Heart left ventricle (tissue), 16 donors: ENCODE measurements at regions of chr6 and their contacts with region 1.

Region 1: GRCh38 chr6:13120483-13121482 is 207.6 kb downstream of the TBC1D7 start:
- DNase-seq: peak in 4 of 5 donors; percentile 41 to 76 (median 59)
- ATAC-seq: peak; percentile 84 to 96 (median 95)
- H3K4me3 ChIP-seq: no peak overlapping the region
- H3K27ac ChIP-seq: peak overlapping the region in 6 of 12 donors; percentile 2 to 64 (median 20)
- H3K4me1 ChIP-seq: peaks cover 0 to 27% (median 9%) of the 10 kb centered on the region in 12 donors
- H3K27me3 ChIP-seq: no peaks in the 10 kb centered on the region
- CTCF ChIP-seq: peak in 7 of 12 donors; percentile 12 to 46 (median 25)
- POLR2A ChIP-seq: no peak

Region 2: GRCh38 chr6:12903246-12903645 is 217.5 kb before region 1 on chr6:
- intact Hi-C with region 1: loop called in 1 of 10 experiments (anchors 10 kb)
- DNase-seq: no peak
- ATAC-seq: peak; percentile 68 to 79 (median 72)
- H3K4me3 ChIP-seq: no peak overlapping the region
- H3K27ac ChIP-seq: no peak overlapping the region
- H3K4me1 ChIP-seq: peaks cover 0 to 13% (median 3%) of the 10 kb centered on the region in 12 donors
- H3K27me3 ChIP-seq: no peaks in the 10 kb centered on the region
- CTCF ChIP-seq: no peak
- POLR2A ChIP-seq: no peak

Region 3: DNA sequence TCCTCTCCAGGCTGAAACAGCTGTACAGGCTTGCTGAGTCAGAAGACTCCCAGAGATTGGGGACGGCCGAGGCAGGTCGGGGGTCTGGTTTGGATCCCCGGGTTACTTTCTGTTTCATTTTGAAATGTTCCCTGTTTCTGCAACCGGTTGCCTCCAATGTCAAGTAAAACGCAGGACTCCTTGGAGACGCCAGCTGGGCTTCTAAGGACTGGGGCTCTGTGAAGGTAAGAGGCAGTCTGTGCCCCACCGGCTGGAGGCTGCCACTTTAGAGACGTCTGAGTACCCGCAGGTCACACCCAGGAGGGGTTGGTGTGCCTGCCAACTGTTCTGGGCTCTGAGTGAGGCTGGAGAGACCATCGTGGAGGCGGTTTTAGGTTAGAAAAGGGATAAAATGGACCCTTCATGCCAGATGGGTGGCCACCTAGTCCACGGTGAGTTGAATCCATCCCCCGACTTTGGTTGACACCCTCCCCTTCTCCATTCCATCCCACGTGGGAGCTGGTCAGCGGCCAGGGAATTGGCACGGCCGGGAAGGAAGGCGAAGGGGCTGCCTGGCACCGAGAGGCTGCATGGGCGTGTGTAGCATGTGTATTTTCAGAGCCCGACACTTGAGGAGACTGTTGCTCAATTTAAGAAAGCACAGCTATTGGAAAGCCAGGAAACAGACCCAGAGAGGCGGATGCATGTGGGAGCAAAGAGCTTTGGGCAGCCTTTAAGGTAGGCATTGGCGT is 163.3 kb before region 1 on chr6:
- intact Hi-C with region 1: loop called in 2 of 10 experiments (anchors 5 kb)
- DNase-seq: peak; percentile 69 to 87 (median 78)
- ATAC-seq: peak; percentile 79 to 89 (median 86)
- H3K4me3 ChIP-seq: peak overlapping the region; percentile 40 to 79 (median 66)
- H3K27ac ChIP-seq: peak overlapping the region; percentile 1 to 91 (median 78)
- H3K4me1 ChIP-seq: peaks cover 0 to 38% (median 14%) of the 10 kb centered on the region in 12 donors
- H3K27me3 ChIP-seq: no peaks in the 10 kb centered on the region
- CTCF ChIP-seq: peak in 5 of 12 donors; percentile 19 to 50 (median 37)
- POLR2A ChIP-seq: no peak

Region 4: GRCh38 chr6:12962987-12963386 is 157.8 kb before region 1 on chr6:
- intact Hi-C with region 1: loop called in 2 of 10 experiments (anchors 5 kb)
- DNase-seq: no peak
- ATAC-seq: peak in 1 of 4 donors; percentile 59
- H3K4me3 ChIP-seq: peak overlapping the region in 10 of 12 donors; percentile 13 to 35 (median 27)
- H3K27ac ChIP-seq: peak overlapping the region; percentile 63 to 88 (median 75)
- H3K4me1 ChIP-seq: peaks cover 0 to 66% (median 26%) of the 10 kb centered on the region in 12 donors
- H3K27me3 ChIP-seq: no peaks in the 10 kb centered on the region
- CTCF ChIP-seq: no peak
- POLR2A ChIP-seq: no peak

Region 5: GRCh38 chr6:13026557-13026956 is 94.2 kb before region 1 on chr6:
- intact Hi-C with region 1: loop called in 4 of 10 experiments (anchors 5 to 10 kb)
- DNase-seq: peak in 3 of 5 donors; percentile 23 to 56 (median 45)
- ATAC-seq: peak; percentile 78 to 86 (median 84)
- H3K4me3 ChIP-seq: no peak overlapping the region
- H3K27ac ChIP-seq: peak overlapping the region in 9 of 12 donors; percentile 20 to 61 (median 31)
- H3K4me1 ChIP-seq: peaks cover 0 to 46% (median 19%) of the 10 kb centered on the region in 12 donors
- H3K27me3 ChIP-seq: no peaks in the 10 kb centered on the region
- CTCF ChIP-seq: peak in 2 of 12 donors; percentile 6 to 7
- POLR2A ChIP-seq: no peak